CD8-positive, alpha-beta T cell (primary cell): ENCODE measurements at regions of chr6 and their contacts with region 1.

Region 1: GRCh38 chr6:169654598-169655391 is 47.0 kb downstream of the WDR27 start:
- DNase-seq: peak; percentile 54 to 89 (median 69)
- ATAC-seq: peak; percentile 97
- H3K4me3 ChIP-seq: peak overlapping the region; percentile 52 to 63
- H3K4me3 Mint-ChIP-seq: peak overlapping the region; percentile 92
- H3K27ac ChIP-seq: peak overlapping the region; percentile 49 to 61
- H3K27ac Mint-ChIP-seq: peak overlapping the region; percentile 90
- H3K4me1 ChIP-seq: peaks cover 6% of the 10 kb centered on the region
- H3K4me1 Mint-ChIP-seq: peaks cover 15% of the 10 kb centered on the region
- H3K27me3 ChIP-seq: no peaks in the 10 kb centered on the region
- H3K27me3 Mint-ChIP-seq: no peaks in the 10 kb centered on the region
- CTCF ChIP-seq: no peak

Region 2: DNA sequence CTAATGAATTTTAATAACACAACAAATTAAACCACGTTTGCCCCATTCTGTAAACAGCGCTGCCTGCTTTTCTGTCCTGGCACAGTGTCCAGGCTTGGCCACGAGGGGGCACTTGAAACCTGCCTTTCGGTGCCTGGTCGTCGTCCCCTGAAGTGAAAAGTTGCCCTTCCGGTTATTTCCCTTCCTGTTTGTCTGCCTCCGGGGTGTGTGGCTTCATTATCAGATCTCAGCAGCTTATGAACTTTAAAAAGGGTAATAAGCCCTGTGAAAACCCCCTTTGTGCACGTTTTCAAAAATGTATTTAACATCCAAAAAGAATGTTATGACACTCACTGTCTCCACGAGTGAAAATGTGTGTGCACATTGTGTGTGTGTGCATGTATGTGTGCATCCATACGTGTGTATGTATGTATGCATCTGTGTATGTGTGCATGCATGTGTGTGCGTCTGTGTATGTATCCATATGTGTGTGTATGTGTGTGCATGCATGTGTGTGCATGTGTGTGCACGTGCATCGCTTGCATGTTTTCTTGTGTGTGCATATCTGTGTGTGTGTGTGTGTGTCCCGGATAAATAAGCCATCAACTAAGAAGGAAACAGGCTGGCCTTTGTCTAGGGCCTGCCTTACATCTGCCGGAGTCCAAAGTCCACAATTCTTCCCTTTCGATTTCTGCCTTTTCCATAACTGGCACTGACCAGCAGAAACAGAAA is 759.5 kb before region 1 on chr6:
- CTCF ChIA-PET with region 1: no interaction called
- POLR2A ChIA-PET with region 1: no interaction called
- intact Hi-C with region 1: loop called (anchors 2 to 10 kb)
- DNase-seq: peak; percentile 52 to 91 (median 78)
- ATAC-seq: peak; percentile 98
- H3K4me3 ChIP-seq: peak overlapping the region; percentile 8 to 16
- H3K4me3 Mint-ChIP-seq: peak overlapping the region; percentile 57
- H3K27ac ChIP-seq: no peak overlapping the region
- H3K27ac Mint-ChIP-seq: peak overlapping the region; percentile 69
- H3K4me1 ChIP-seq: peaks cover 7% of the 10 kb centered on the region
- H3K4me1 Mint-ChIP-seq: peaks cover 17% of the 10 kb centered on the region
- H3K27me3 ChIP-seq: no peaks in the 10 kb centered on the region
- H3K27me3 Mint-ChIP-seq: peaks cover 4% of the 10 kb centered on the region
- CTCF ChIP-seq: peak; percentile 81

Region 3: DNA sequence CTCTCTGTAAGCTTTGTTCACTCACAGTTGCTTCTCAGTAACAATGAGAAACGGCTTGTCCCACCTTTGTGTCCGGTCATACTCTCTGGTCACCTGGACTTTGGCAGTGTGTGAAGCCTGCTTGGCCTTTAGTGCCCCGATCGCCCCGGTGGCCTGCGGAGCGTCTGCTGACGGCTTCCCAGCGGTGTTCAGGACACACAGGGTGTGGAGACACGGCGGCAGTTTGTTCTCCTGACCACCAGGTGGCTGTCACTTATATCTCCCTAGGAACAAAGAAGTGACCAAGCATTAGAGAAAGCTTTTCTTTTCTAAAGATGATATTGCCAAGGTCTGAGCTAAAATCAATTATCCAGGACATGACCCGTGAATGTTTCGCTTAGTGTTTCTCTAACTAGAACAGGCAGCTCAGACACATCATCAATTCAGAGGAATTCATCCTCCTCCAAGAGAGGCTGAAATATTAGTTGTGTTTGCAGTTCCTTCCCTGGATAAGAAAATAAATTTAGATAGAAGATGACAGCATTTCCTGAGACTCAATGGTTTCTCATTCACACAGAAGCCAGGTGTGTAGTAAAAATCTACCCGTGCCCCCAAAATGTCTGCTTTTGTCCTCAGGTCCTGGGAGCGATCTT is 233.8 kb before region 1 on chr6:
- CTCF ChIA-PET with region 1: no interaction called
- POLR2A ChIA-PET with region 1: no interaction called
- intact Hi-C with region 1: loop called in 1 of 2 experiments (anchors 2 kb)
- DNase-seq: no peak
- ATAC-seq: no peak
- H3K4me3 ChIP-seq: no peak overlapping the region
- H3K4me3 Mint-ChIP-seq: no peak overlapping the region
- H3K27ac ChIP-seq: no peak overlapping the region
- H3K27ac Mint-ChIP-seq: no peak overlapping the region
- H3K4me1 ChIP-seq: no peaks in the 10 kb centered on the region
- H3K4me1 Mint-ChIP-seq: no peaks in the 10 kb centered on the region
- H3K27me3 ChIP-seq: no peaks in the 10 kb centered on the region
- H3K27me3 Mint-ChIP-seq: peaks cover 7% of the 10 kb centered on the region
- CTCF ChIP-seq: peak; percentile 32

Region 4: GRCh38 chr6:169503422-169504152 is 151.2 kb before region 1 on chr6:
- CTCF ChIA-PET with region 1: no interaction called
- POLR2A ChIA-PET with region 1: no interaction called
- intact Hi-C with region 1: loop called in 1 of 2 experiments (anchors 10 kb)
- DNase-seq: no peak
- ATAC-seq: no peak
- H3K4me3 ChIP-seq: no peak overlapping the region
- H3K4me3 Mint-ChIP-seq: no peak overlapping the region
- H3K27ac ChIP-seq: no peak overlapping the region
- H3K27ac Mint-ChIP-seq: no peak overlapping the region
- H3K4me1 ChIP-seq: no peaks in the 10 kb centered on the region
- H3K4me1 Mint-ChIP-seq: no peaks in the 10 kb centered on the region
- H3K27me3 ChIP-seq: no peaks in the 10 kb centered on the region
- H3K27me3 Mint-ChIP-seq: no peaks in the 10 kb centered on the region
- CTCF ChIP-seq: no peak

Region 5: DNA sequence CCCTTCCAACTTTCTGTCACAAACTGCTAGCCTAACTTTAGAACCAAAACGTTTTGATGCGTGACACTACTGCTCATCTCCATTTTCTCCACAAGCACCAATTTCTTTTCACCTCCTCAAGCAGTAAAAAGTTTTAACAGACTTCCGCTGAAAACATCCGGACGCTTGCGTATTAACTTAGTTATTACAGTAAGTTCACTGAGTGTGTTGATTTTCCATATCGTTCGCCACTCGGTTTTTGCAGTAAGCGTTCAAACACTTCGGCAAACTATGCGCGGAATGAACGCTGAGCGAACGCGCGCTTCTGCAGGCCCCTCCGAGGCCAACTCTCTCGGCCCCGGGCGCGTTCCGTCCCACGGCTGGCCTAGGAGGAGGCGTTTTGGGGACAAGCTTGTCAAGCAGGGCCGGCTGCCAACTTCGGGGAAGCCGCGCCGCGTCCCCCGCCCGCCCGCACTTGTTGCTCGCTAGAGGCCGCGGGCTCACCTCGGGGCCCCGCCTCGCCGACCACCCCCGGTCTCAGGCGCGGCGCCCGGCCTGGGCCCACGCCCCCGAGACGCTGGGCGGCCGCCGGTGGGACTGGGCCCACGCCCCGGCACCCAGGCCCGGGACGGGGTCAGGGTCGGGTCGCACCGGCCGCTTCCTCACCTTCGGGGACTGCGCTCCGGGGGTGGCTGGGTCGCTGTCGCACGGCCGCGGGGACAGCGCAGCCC is 68.6 kb after region 1 on chr6:
- CTCF ChIA-PET with region 1: no interaction called
- POLR2A ChIA-PET with region 1: interaction called, 4 read pairs
- intact Hi-C with region 1: loop called in 1 of 2 experiments (anchors 2 kb)
- DNase-seq: peak; percentile 47 to 85 (median 66)
- ATAC-seq: peak; percentile 30
- H3K4me3 ChIP-seq: peak overlapping the region; percentile 68 to 79
- H3K4me3 Mint-ChIP-seq: peak overlapping the region; percentile 85
- H3K27ac ChIP-seq: peak overlapping the region; percentile 72 to 84
- H3K27ac Mint-ChIP-seq: peak overlapping the region; percentile 96
- H3K4me1 ChIP-seq: peaks cover 22% of the 10 kb centered on the region
- H3K4me1 Mint-ChIP-seq: peaks cover 42% of the 10 kb centered on the region
- H3K27me3 ChIP-seq: no peaks in the 10 kb centered on the region
- H3K27me3 Mint-ChIP-seq: no peaks in the 10 kb centered on the region
- CTCF ChIP-seq: no peak